Activated CD4-positive, alpha-beta T cell treated with anti-CD3 and anti-CD28 coated beads, Interleukin-2, amount 10 ng/mL, durations not matched to agents 24 days and 14 days (primary cell): ENCODE measurements at regions of chr16 and their contacts with region 1.

Region 1: DNA sequence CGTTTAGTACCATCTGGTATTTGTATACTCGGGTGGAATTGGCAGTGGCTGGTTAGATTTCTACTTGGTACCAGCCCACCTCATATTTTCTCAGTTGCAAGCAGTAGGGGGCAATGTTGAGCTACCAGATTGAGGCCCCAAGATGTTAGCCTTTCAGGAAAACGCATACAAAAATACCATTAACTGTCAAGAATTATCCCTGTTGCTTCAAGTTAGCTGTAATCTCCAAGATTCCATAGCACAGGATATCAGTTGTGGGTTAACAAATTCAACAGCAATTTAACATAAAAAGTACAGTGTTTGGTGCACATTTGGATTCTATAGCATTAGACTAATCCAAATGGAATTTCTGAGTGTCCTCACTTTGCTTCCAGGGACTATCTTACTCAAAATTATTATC is 188.2 kb downstream of the FTO start:
- DNase-seq: peak; percentile 89
- H3K4me3 Mint-ChIP-seq: no peak overlapping the region
- H3K27ac Mint-ChIP-seq: peak overlapping the region; percentile 58
- H3K4me1 Mint-ChIP-seq: peaks cover 28% of the 10 kb centered on the region
- H3K27me3 Mint-ChIP-seq: no peaks in the 10 kb centered on the region

Region 2: DNA sequence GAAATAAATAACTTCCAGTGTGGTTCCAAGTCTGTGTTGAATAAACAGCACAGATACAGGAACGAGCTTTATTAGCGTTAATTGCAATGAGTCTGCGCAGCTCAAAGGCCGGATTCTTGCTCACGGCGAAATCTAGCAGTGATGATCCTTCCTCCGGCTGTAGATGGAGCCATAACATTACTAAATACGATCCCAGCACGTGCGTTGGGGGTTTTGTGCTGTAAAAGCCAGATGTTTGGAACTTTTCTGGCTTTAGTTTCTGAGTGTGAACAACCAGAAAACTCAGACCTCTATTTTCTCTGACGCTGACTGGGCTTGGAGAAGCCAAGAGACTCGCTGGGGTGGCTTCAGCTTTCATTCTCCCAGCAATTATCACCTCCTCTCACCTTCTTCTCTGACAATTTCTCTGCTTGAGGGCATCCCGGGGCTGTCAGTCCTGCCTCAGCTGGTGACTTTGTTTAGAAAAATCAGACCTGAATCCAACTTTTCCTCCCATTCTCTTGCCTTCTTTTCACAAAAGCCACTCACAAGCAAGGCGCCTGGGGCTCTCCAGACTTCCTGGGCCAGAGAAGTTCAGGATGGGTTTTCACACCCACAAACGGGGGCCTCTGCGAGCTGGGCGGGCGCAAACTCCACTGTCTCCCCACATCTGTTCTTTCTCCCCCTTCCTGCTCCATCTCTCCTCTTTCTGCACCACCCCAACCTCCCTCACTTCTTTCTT is 342.0 kb before region 1 on chr16:
- intact Hi-C with region 1: loop called (anchors 10 kb)
- DNase-seq: peak; percentile 85
- H3K4me3 Mint-ChIP-seq: no peak overlapping the region
- H3K27ac Mint-ChIP-seq: no peak overlapping the region
- H3K4me1 Mint-ChIP-seq: peaks cover 26% of the 10 kb centered on the region
- H3K27me3 Mint-ChIP-seq: peaks cover 33% of the 10 kb centered on the region

Region 3: GRCh38 chr16:53952215-53953208 is 60.4 kb after region 1 on chr16:
- intact Hi-C with region 1: no loop called
- DNase-seq: peak; percentile 68
- H3K4me3 Mint-ChIP-seq: peak overlapping the region; percentile 70
- H3K27ac Mint-ChIP-seq: peak overlapping the region; percentile 58
- H3K4me1 Mint-ChIP-seq: peaks cover 41% of the 10 kb centered on the region
- H3K27me3 Mint-ChIP-seq: no peaks in the 10 kb centered on the region

Region 4: GRCh38 chr16:54957403-54958171 is 1065.4 kb after region 1 on chr16:
- intact Hi-C with region 1: loop called (anchors 5 kb)
- DNase-seq: peak; percentile 74
- H3K4me3 Mint-ChIP-seq: no peak overlapping the region
- H3K27ac Mint-ChIP-seq: no peak overlapping the region
- H3K4me1 Mint-ChIP-seq: no peaks in the 10 kb centered on the region
- H3K27me3 Mint-ChIP-seq: no peaks in the 10 kb centered on the region